ENCODE measurements at regions of chr15 and their contacts with region 1.

Region 1: GRCh38 chr15:93005133-93005532 is 83.9 kb downstream of the RGMA start:
- DNase-seq: no peak
- H3K4me3 Mint-ChIP-seq: no peak overlapping the region
- H3K27ac Mint-ChIP-seq: no peak overlapping the region
- H3K4me1 Mint-ChIP-seq: peaks cover 5% of the 10 kb centered on the region
- H3K27me3 Mint-ChIP-seq: no peaks in the 10 kb centered on the region

Region 2: DNA sequence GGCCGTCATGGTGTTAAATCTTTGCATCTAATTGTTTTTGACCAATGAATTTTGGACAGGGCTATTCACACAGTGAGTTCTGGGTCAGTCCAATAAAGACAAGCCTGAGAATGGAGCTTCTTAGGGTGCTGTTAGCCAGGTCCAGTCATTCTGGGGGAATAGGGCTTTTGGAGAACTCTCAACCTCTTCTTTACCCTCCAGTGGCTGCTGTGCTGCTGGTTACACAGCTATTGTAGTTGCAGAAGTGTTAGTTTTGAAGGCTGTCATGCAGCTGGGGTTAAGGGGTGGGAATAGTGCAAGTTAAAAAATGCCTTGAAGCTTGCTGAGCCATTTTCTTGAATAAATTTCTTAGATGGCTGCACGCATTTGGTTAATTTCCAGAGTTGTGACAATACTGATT is 15.1 kb before region 1 on chr15:
- intact Hi-C with region 1: loop called (anchors 2 kb)
- DNase-seq: no peak
- H3K4me3 Mint-ChIP-seq: no peak overlapping the region
- H3K27ac Mint-ChIP-seq: no peak overlapping the region
- H3K4me1 Mint-ChIP-seq: peaks cover 14% of the 10 kb centered on the region
- H3K27me3 Mint-ChIP-seq: no peaks in the 10 kb centered on the region

Region 3: GRCh38 chr15:93478947-93479346 is 473.8 kb after region 1 on chr15:
- intact Hi-C with region 1: no loop called
- DNase-seq: no peak
- H3K4me3 Mint-ChIP-seq: no peak overlapping the region
- H3K27ac Mint-ChIP-seq: no peak overlapping the region
- H3K4me1 Mint-ChIP-seq: no peaks in the 10 kb centered on the region
- H3K27me3 Mint-ChIP-seq: peaks cover 3% of the 10 kb centered on the region

Measured in activated T-helper 1 cell treated with anti-CD3 and anti-CD28 coated beads, Interleukin-12 subunit alpha, Interleukin-12 subunit beta, Interleukin-2, Interleukin-4 antibody, amounts not matched to agents 30 ng/mL and 10 ng/mL and 1 ng/mL, durations not matched to agents 14 hours and 24 hours and 36 hours (primary cell).